GM10248 (cell line): ENCODE measurements at regions of chr12 and their contacts with region 1.

Region 1: DNA sequence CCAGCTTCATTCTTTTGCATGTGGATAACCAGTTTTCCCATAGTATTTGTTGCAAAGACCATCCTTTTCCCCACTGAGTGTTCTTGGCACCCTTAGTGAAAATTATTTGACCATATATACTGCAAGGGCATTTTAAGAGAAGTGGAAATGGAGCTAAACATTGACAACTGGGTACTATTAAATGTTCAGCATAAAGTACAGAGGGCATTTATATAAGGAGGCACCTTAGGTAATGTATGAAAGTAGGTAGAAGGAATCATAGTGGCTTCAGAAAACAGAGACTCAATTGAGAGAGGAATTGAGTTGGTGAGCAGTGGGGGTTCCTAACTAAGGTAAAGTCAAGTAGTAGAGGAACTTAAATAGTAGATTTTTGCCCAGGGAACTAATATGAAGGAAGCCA is 34.5 kb upstream of the SMCO2 start:
- DNase-seq: no peak
- CTCF ChIP-seq: no peak

Region 2: DNA sequence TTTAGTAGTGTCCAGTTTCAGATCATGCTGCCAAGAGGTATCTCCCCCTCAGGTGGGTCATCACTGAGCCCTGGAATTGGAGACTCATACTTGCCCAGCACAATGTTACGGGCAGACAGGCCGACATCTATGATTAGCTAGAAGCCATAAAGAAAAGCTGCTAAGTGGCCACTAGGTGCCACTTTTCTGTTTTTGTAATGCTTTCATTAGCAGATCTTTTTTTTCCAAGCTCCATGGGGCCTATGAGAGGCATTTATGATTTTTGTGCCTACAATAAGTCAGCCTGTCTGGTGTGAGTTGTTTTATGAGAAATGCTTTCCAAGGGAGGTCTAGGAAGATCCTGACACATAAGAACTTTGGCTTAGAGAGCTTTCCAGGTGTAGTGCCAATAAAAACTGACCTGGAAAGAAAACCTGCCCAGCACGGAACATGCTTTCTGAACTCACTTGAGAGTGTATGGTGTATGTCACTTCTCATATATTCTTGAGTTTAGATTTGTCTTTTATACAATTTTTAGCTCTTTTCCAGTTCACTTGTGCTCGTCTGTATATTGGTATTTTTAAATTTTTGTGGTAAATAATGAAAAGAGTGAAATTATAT is 12.7 kb after region 1 on chr12:
- CTCF ChIA-PET with region 1: interaction called, 11 read pairs
- POLR2A ChIA-PET with region 1: no interaction called
- DNase-seq: peak; percentile 20
- CTCF ChIP-seq: peak; percentile 20

Region 3: DNA sequence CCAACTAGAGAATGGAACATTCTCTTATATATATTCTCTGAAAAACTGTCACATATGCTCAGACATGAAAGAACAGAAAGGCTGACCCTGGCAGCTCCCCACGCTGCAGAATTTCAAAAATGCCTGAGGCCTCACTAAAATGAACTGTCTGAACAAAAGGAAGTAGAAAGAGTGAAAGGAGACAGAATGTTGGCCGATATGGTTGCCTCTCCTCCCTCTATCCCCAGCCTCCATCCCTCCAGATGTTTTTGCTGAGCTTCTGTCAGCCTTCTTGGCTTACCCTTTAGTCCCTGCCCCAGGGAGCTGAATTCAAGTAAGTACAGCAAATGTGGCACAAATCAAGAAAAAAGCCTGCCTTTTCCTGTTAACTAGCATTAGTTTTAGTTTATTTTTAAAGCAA is 41.4 kb after region 1 on chr12:
- CTCF ChIA-PET with region 1: no interaction called
- POLR2A ChIA-PET with region 1: no interaction called
- DNase-seq: no peak
- CTCF ChIP-seq: no peak

Region 4: GRCh38 chr12:27474344-27474743 is 62.3 kb after region 1 on chr12:
- CTCF ChIA-PET with region 1: no interaction called
- POLR2A ChIA-PET with region 1: no interaction called
- DNase-seq: no peak
- CTCF ChIP-seq: no peak

Region 5: DNA sequence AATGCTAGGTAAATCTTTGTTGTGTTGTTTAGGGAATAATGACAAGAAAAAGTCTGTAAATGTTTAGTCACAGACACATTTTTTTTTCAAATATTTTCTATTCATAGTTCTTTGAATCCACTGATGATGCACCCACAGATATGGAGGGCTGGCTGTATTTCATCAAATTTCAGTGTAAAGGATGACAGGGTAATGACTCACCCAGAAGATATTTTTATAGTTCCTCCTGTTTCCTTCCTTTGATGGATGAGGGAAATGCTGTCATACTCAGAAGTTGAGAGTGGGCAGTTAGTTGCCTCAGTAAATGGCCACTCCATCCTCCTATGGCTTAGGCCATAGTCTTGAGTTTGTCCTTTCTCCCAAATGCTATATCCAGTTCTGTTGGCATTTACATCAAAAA is 207.3 kb after region 1 on chr12:
- CTCF ChIA-PET with region 1: no interaction called
- POLR2A ChIA-PET with region 1: no interaction called
- DNase-seq: no peak
- CTCF ChIP-seq: no peak